ENCODE measurements at regions of chr6 and their contacts with region 1.

Region 1: GRCh38 chr6:34671801-34672656 is 24.5 kb downstream of the ILRUN start:
- DNase-seq: no peak
- H3K4me3 ChIP-seq: no peak overlapping the region
- H3K4me3 Mint-ChIP-seq: no peak overlapping the region
- H3K27ac Mint-ChIP-seq: peak overlapping the region; percentile 80
- H3K4me1 ChIP-seq: peaks cover 84% of the 10 kb centered on the region
- H3K4me1 Mint-ChIP-seq: peaks cover 42% of the 10 kb centered on the region
- H3K27me3 ChIP-seq: no peaks in the 10 kb centered on the region
- H3K27me3 Mint-ChIP-seq: no peaks in the 10 kb centered on the region
- CTCF ChIP-seq: no peak

Region 2: GRCh38 chr6:34341481-34341971 is 330.5 kb before region 1 on chr6:
- CTCF ChIA-PET with region 1: no interaction called
- POLR2A ChIA-PET with region 1: no interaction called
- intact Hi-C with region 1: no loop called
- DNase-seq: no peak
- H3K4me3 ChIP-seq: no peak overlapping the region
- H3K4me3 Mint-ChIP-seq: no peak overlapping the region
- H3K27ac Mint-ChIP-seq: no peak overlapping the region
- H3K4me1 ChIP-seq: no peaks in the 10 kb centered on the region
- H3K4me1 Mint-ChIP-seq: peaks cover 20% of the 10 kb centered on the region
- H3K27me3 ChIP-seq: no peaks in the 10 kb centered on the region
- H3K27me3 Mint-ChIP-seq: no peaks in the 10 kb centered on the region
- CTCF ChIP-seq: no peak

Region 3: GRCh38 chr6:34602318-34603111 is 69.5 kb before region 1 on chr6:
- CTCF ChIA-PET with region 1: no interaction called
- POLR2A ChIA-PET with region 1: no interaction called
- intact Hi-C with region 1: loop called (anchors 2 kb)
- DNase-seq: peak in 1 of 2 experiments; percentile 29
- H3K4me3 ChIP-seq: no peak overlapping the region
- H3K4me3 Mint-ChIP-seq: peak overlapping the region; percentile 43
- H3K27ac Mint-ChIP-seq: peak overlapping the region; percentile 54
- H3K4me1 ChIP-seq: peaks cover 59% of the 10 kb centered on the region
- H3K4me1 Mint-ChIP-seq: peaks cover 29% of the 10 kb centered on the region
- H3K27me3 ChIP-seq: no peaks in the 10 kb centered on the region
- H3K27me3 Mint-ChIP-seq: no peaks in the 10 kb centered on the region
- CTCF ChIP-seq: no peak

Region 4: DNA sequence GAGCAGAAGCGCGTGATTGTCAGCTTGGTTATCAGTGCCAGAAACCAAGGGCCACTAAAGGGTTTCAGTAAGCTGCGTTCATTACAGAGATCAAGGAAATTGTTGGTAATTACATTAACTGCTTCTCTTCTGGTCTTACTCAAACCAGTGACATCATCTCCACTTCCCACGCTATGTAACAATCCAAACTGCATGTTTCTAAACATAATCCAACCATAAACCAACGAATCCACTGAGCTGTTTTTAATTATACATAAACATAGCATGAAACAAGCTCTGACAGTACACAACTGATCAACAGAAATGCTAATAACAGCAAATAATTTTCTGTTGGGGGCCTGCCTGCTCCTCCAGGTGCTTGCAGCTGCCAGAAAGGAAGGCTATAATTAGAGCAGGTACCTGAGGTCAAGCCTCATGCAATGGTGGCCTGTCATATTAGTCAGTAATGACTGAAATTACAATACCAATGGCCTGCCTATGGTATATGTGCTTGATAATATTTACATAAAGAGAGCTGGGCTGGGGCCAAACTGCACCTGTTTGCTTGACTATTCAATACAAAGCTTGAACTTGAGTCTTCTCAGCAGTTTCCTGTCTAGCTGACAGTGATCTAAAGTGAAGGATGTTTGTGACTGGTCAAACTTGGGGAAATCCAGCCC is 15.5 kb before region 1 on chr6:
- CTCF ChIA-PET with region 1: no interaction called
- POLR2A ChIA-PET with region 1: interaction called, 6 read pairs
- intact Hi-C with region 1: loop called (anchors 1 kb)
- DNase-seq: no peak
- H3K4me3 ChIP-seq: no peak overlapping the region; the same call in 1 of the 2 replicates
- H3K4me3 Mint-ChIP-seq: peak overlapping the region; percentile 69
- H3K27ac Mint-ChIP-seq: peak overlapping the region; percentile 91
- H3K4me1 ChIP-seq: peaks cover 46% of the 10 kb centered on the region
- H3K4me1 Mint-ChIP-seq: peaks cover 26% of the 10 kb centered on the region
- H3K27me3 ChIP-seq: no peaks in the 10 kb centered on the region
- H3K27me3 Mint-ChIP-seq: no peaks in the 10 kb centered on the region
- CTCF ChIP-seq: no peak

Region 5: GRCh38 chr6:34696739-34697543 is 24.9 kb after region 1 on chr6 and contains the start of gene ILRUN:
- CTCF ChIA-PET with region 1: interaction called, 3 read pairs
- POLR2A ChIA-PET with region 1: no interaction called
- intact Hi-C with region 1: loop called (anchors 2 kb)
- DNase-seq: peak; percentile 96 to 97
- H3K4me3 ChIP-seq: peak within 1 kb of the TSS; percentile 74
- H3K4me3 Mint-ChIP-seq: peak within 1 kb of the TSS; percentile 78
- H3K27ac Mint-ChIP-seq: peak within 1 kb of the TSS; percentile 77
- H3K4me1 ChIP-seq: peaks cover 11% of the 10 kb centered on the region
- H3K4me1 Mint-ChIP-seq: peaks cover 29% of the 10 kb centered on the region
- H3K27me3 ChIP-seq: no peaks in the 10 kb centered on the region
- H3K27me3 Mint-ChIP-seq: no peaks in the 10 kb centered on the region
- CTCF ChIP-seq: no peak
- total RNA-seq, gene ILRUN: 92.1 and 95.9 TPM in 2 replicates

Region 6: DNA sequence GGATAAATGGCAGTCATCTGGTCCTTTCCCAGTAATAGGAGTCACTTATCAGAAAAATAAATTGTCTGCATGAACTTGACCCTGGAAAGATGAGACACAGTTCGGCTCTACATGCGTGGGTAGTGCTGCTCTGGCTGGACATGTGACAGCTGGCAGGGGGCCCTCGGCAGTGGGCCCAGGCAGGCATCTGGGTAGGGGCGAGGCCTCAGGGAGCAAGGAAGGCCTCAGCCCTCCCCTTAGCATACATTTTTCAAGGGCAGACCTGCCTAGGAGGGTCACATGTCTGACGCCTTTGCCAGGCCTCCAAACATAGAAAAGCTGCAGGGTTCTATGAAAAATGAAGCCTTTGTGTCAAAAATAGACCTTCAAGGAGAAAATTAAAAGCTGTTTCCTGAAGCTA is 37.4 kb after region 1 on chr6:
- CTCF ChIA-PET with region 1: no interaction called
- POLR2A ChIA-PET with region 1: no interaction called
- intact Hi-C with region 1: no loop called
- DNase-seq: no peak
- H3K4me3 ChIP-seq: no peak overlapping the region
- H3K4me3 Mint-ChIP-seq: no peak overlapping the region
- H3K27ac Mint-ChIP-seq: no peak overlapping the region
- H3K4me1 ChIP-seq: peaks cover 13% of the 10 kb centered on the region
- H3K4me1 Mint-ChIP-seq: peaks cover 9% of the 10 kb centered on the region
- H3K27me3 ChIP-seq: no peaks in the 10 kb centered on the region
- H3K27me3 Mint-ChIP-seq: no peaks in the 10 kb centered on the region
- CTCF ChIP-seq: no peak

Region 7: GRCh38 chr6:34745277-34746103 is 73.5 kb after region 1 on chr6:
- CTCF ChIA-PET with region 1: no interaction called
- POLR2A ChIA-PET with region 1: interaction called, 3 read pairs
- intact Hi-C with region 1: loop called (anchors 5 kb)
- DNase-seq: peak; percentile 81 to 83
- H3K4me3 ChIP-seq: no peak overlapping the region
- H3K4me3 Mint-ChIP-seq: peak overlapping the region; percentile 44
- H3K27ac Mint-ChIP-seq: peak overlapping the region; percentile 88
- H3K4me1 ChIP-seq: peaks cover 32% of the 10 kb centered on the region
- H3K4me1 Mint-ChIP-seq: peaks cover 24% of the 10 kb centered on the region
- H3K27me3 ChIP-seq: no peaks in the 10 kb centered on the region
- H3K27me3 Mint-ChIP-seq: no peaks in the 10 kb centered on the region
- CTCF ChIP-seq: no peak

Region 8: DNA sequence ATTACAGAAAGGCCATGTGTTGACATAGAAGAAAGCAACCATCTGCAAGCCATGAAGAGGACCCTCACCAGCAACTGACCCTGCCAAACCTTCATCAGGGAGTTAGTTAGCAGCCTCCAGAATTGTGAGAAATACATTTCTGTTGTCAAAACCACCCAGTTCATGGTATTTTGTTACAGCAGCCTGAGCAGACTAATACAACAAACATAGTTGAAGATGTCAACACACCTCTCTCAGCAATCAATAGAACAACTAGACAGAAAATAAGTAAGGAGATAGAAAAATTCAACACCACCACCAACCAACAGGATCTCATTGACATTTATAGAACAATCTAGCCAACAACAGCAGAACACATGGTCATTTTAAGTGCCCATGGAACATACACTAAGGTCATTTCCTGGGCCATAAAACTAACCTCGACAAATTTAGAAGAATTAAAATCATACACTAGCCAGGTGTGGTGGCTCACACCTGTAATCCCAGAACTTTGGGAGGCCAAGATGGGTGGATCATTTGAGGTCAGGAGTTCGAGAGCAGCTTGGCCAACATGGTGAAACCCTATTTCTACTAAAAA is 436.4 kb after region 1 on chr6:
- CTCF ChIA-PET with region 1: no interaction called
- POLR2A ChIA-PET with region 1: no interaction called
- intact Hi-C with region 1: no loop called
- DNase-seq: no peak
- H3K4me3 ChIP-seq: no peak overlapping the region
- H3K4me3 Mint-ChIP-seq: no peak overlapping the region
- H3K27ac Mint-ChIP-seq: no peak overlapping the region
- H3K4me1 ChIP-seq: no peaks in the 10 kb centered on the region
- H3K4me1 Mint-ChIP-seq: peaks cover 9% of the 10 kb centered on the region
- H3K27me3 ChIP-seq: no peaks in the 10 kb centered on the region
- H3K27me3 Mint-ChIP-seq: no peaks in the 10 kb centered on the region
- CTCF ChIP-seq: no peak